ENCODE measurements at regions of chr13 and their contacts with region 1.

Region 1: DNA sequence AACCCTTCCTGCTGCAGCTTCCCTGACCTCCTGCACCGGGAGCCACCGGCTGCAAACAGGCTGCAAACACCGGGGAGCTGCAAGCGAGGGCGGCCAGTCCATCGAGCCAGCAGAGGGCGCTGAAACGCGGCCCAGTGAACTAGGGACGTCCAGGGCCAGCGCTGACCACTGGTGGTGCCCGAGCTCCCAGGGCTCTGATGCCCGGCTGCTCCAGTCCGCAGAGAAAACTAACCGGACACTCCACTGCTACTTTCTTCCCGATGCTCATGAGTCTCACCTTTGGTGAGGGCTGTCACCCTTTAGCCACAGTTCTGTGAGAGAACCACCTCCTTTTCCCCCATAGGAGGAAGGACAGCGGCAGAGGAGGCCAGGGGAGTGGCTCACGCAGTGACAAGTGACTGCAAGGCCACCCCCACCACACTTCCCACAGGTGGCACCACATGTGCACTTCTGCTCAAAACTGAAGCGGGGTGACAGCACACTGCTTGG is 82.8 kb upstream of the MTIF3 start:
- DNase-seq: peak; percentile 93
- ATAC-seq: peak; percentile 91
- H3K4me3 Mint-ChIP-seq: no peak overlapping the region
- H3K27ac Mint-ChIP-seq: no peak overlapping the region
- H3K4me1 Mint-ChIP-seq: no peaks in the 10 kb centered on the region; the same call in 1 of the 2 replicates
- H3K27me3 Mint-ChIP-seq: no peaks in the 10 kb centered on the region
- CTCF ChIP-seq: peak; percentile 77

Region 2: GRCh38 chr13:27549406-27549981 is 16.3 kb after region 1 on chr13:
- CTCF ChIA-PET with region 1: interaction called, 12 read pairs
- POLR2A ChIA-PET with region 1: no interaction called
- DNase-seq: no peak
- ATAC-seq: no peak
- H3K4me3 Mint-ChIP-seq: no peak overlapping the region
- H3K27ac Mint-ChIP-seq: no peak overlapping the region
- H3K4me1 Mint-ChIP-seq: no peaks in the 10 kb centered on the region
- H3K27me3 Mint-ChIP-seq: no peaks in the 10 kb centered on the region
- CTCF ChIP-seq: no peak

Region 3: GRCh38 chr13:27620377-27621115 is 87.3 kb after region 1 on chr13 and contains the start of gene LNX2:
- CTCF ChIA-PET with region 1: interaction called, 15 read pairs
- POLR2A ChIA-PET with region 1: interaction called, 3 read pairs
- DNase-seq: peak; percentile 98
- ATAC-seq: peak; percentile 92
- H3K4me3 Mint-ChIP-seq: peak within 1 kb of the TSS; percentile 93
- H3K27ac Mint-ChIP-seq: peak within 1 kb of the TSS; percentile 96
- H3K4me1 Mint-ChIP-seq: peaks cover 54% of the 10 kb centered on the region
- H3K27me3 Mint-ChIP-seq: no peaks in the 10 kb centered on the region
- CTCF ChIP-seq: no peak
- total RNA-seq, gene LNX2: 9.6 to 10.1 TPM (median 9.8 TPM) in 3 replicates